ENCODE measurements at regions of chr22 and their contacts with region 1.

Region 1: DNA sequence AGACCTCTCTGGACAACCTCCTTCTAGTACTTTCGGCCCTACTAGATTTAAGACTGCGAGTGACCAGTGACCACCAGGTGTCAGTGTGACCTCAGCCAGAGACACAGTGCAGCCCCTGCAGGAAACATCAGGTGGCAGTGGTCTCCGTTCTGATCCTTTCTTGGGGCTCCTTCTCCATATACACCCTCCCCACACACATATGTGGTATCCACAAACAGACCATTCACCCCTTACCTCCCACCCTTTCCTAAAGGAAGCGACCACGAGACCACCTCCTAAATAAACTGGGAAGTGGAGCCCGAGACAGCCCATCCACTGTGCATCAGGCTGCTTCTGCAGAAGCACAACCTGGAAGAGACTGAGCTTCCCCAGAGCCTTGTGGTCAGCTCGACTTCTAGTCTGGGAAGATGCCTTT is 38.5 kb upstream of the CYP2D6 start:
- DNase-seq: peak; percentile 56 to 86 (median 64)
- H3K4me3 ChIP-seq: no peak overlapping the region
- H3K4me3 Mint-ChIP-seq: no peak overlapping the region
- H3K27ac ChIP-seq: no peak overlapping the region
- H3K27ac Mint-ChIP-seq: peak overlapping the region in 5 of 8 donors; percentile 4 to 71 (median 22)
- H3K4me1 ChIP-seq: peaks cover 7% of the 10 kb centered on the region
- H3K4me1 Mint-ChIP-seq: peaks cover 27 to 43% (median 40%) of the 10 kb centered on the region in 3 donors
- H3K27me3 ChIP-seq: no peaks in the 10 kb centered on the region
- H3K27me3 Mint-ChIP-seq: no peaks in the 10 kb centered on the region

Region 2: DNA sequence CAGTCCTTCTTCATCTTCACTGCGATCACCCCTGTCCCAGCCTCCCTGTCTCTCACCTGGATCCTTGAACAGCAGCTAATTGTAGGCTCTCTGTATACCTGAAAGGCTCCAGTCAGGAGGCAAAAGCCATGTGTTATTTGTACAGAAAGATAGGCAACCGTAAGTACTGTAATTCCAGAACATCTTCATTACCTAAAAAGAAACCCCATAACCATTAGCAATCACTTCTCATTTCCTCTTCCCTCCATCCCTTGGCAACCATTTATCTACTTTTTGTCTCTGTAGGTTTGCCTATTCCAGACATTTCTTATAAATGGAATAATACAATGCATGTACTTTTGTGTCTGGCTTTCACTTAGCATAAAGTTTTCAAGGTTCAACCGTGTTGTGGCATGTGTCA is 116.3 kb before region 1 on chr22:
- CTCF ChIA-PET with region 1: no interaction called
- POLR2A ChIA-PET with region 1: no interaction called
- DNase-seq: no peak
- H3K4me3 ChIP-seq: no peak overlapping the region
- H3K4me3 Mint-ChIP-seq: no peak overlapping the region
- H3K27ac ChIP-seq: no peak overlapping the region
- H3K27ac Mint-ChIP-seq: peak overlapping the region in 2 of 8 donors; percentile 47 to 51
- H3K4me1 ChIP-seq: no peaks in the 10 kb centered on the region
- H3K4me1 Mint-ChIP-seq: no peaks in the 10 kb centered on the region
- H3K27me3 ChIP-seq: no peaks in the 10 kb centered on the region
- H3K27me3 Mint-ChIP-seq: no peaks in the 10 kb centered on the region

Region 3: DNA sequence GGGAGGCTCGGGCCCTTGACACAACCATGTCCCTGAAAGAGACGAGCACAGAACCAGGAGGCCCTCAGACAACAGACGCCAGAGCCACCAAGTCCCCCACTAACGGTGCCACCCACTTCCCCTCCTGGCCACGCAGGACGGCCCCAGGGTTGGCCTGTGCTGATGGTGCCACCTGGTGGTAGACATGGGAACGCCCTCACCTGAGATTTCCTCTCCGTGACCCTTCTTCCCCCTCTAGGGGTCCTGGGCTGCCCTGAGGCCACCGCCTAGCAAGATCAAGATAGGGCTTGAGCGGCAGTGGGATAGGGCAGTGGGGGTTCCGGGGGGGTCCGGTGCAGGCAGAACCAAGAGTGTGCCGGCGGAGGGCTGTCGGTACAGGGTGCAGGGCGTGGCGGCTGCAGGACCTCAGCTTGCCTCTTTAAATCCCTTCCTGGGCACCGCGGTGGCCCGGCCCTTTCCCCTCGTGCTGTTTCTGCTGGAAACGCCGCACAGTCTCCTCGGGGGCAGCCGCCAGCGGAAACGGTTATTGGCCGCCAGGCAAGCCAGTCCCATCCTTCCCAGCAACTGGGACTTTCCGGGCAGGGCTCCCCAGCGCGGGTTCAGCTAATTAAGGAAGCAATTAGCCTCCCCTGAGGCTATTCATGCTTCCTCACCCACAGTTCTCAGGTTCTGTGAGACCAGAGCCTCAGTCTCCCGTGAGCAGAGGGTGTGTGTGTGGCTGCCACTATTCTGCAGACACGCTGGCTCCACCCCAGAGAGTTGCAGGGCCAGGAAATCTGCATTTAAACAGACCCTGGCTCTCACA is 268.6 kb after region 1 on chr22:
- CTCF ChIA-PET with region 1: interaction called, 54 read pairs
- POLR2A ChIA-PET with region 1: interaction called, 4 read pairs
- DNase-seq: peak; percentile 76 to 90 (median 81)
- H3K4me3 ChIP-seq: peak overlapping the region; percentile 73
- H3K4me3 Mint-ChIP-seq: peak overlapping the region; percentile 69 to 93 (median 82)
- H3K27ac ChIP-seq: peak overlapping the region; percentile 38
- H3K27ac Mint-ChIP-seq: peak overlapping the region in 5 of 8 donors; percentile 54 to 73 (median 63)
- H3K4me1 ChIP-seq: peaks cover 9% of the 10 kb centered on the region
- H3K4me1 Mint-ChIP-seq: peaks cover 4 to 12% (median 8%) of the 10 kb centered on the region in 3 donors
- H3K27me3 ChIP-seq: no peaks in the 10 kb centered on the region
- H3K27me3 Mint-ChIP-seq: peaks cover 2 to 6% of the 10 kb centered on the region in 2 donors

Region 4: DNA sequence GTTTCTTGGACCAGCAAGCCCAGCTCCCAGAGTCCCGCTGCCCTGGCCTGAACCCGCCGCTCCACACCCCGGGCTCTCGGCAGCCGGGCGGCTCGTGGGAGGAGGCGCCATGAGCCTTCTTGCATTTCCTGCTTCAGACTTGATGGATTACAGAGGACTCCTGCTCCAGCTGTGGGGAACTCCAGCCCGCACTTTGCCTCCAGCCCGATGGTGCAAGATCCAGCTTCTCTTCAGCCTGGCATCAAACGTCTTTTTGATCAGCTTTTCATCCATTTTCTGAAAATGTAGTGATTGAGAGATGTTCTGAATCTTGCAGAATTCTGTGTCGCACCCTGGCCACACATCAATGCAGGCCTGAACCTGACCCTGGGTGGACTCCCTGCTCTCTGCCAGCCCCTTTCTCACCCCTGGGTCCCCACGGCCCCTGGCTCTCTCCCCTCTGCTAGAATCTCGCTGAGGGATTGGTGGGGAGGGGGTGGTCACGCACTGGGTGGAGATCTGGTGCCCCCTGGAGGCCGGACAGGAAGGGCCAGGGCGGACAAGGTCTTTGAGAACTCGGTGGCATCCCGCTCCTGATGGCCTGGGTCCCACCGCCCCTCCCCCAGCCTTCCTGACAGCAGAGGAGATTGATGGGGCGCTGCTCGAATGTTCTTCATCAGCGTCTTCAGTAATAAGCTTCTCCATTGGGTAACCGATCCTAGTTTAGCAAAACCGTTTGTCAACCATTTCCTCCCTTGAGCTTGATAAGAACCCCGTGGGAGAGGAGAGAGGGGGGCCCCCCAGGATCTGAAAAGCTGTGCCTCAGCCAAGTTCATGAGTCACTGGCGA is 275.2 kb after region 1 on chr22:
- CTCF ChIA-PET with region 1: interaction called, 54 read pairs
- POLR2A ChIA-PET with region 1: no interaction called
- DNase-seq: peak; percentile 63 to 85 (median 77)
- H3K4me3 ChIP-seq: peak overlapping the region; percentile 87
- H3K4me3 Mint-ChIP-seq: peak overlapping the region; percentile 55 to 91 (median 79)
- H3K27ac ChIP-seq: peak overlapping the region; percentile 67
- H3K27ac Mint-ChIP-seq: peak overlapping the region; percentile 76 to 96 (median 90)
- H3K4me1 ChIP-seq: peaks cover 20% of the 10 kb centered on the region
- H3K4me1 Mint-ChIP-seq: peaks cover 15 to 21% (median 18%) of the 10 kb centered on the region in 3 donors
- H3K27me3 ChIP-seq: no peaks in the 10 kb centered on the region
- H3K27me3 Mint-ChIP-seq: peaks cover under 1% of the 10 kb centered on the region in 2 donors